PC-9 (cell line): ENCODE measurements at regions of chr7 and their contacts with region 1.

Region 1: GRCh38 chr7:128135515-128136214 is 104.4 kb upstream of the LRRC4 start:
- DNase-seq: peak in 1 of 2 experiments; percentile 72
- H3K4me3 ChIP-seq: peak overlapping the region; percentile 82
- H3K27ac ChIP-seq: no peak overlapping the region
- H3K4me1 ChIP-seq: no peaks in the 10 kb centered on the region
- H3K27me3 ChIP-seq: 0 out of 2 replicates have a peak, but pooled peaks cover 9% of the 10 kb centered on the region
- CTCF ChIP-seq: peak; percentile 64

Region 2: GRCh38 chr7:128322040-128322643 is 186.5 kb after region 1 on chr7:
- CTCF ChIA-PET with region 1: no interaction called
- POLR2A ChIA-PET with region 1: no interaction called
- intact Hi-C with region 1: loop called (anchors 5 kb)
- DNase-seq: peak; percentile 14 to 43
- H3K4me3 ChIP-seq: no peak overlapping the region
- H3K27ac ChIP-seq: no peak overlapping the region
- H3K4me1 ChIP-seq: no peaks in the 10 kb centered on the region
- H3K27me3 ChIP-seq: no peaks in the 10 kb centered on the region
- CTCF ChIP-seq: peak; percentile 66

Region 3: GRCh38 chr7:129030440-129030839 is 894.8 kb after region 1 on chr7:
- CTCF ChIA-PET with region 1: no interaction called
- POLR2A ChIA-PET with region 1: no interaction called
- intact Hi-C with region 1: no loop called
- DNase-seq: no peak
- H3K4me3 ChIP-seq: no peak overlapping the region
- H3K27ac ChIP-seq: no peak overlapping the region
- H3K4me1 ChIP-seq: no peaks in the 10 kb centered on the region
- H3K27me3 ChIP-seq: no peaks in the 10 kb centered on the region
- CTCF ChIP-seq: no peak